Breast epithelium (tissue), 4 donors: ENCODE measurements at regions of chr4 and their contacts with region 1.

Region 1: DNA sequence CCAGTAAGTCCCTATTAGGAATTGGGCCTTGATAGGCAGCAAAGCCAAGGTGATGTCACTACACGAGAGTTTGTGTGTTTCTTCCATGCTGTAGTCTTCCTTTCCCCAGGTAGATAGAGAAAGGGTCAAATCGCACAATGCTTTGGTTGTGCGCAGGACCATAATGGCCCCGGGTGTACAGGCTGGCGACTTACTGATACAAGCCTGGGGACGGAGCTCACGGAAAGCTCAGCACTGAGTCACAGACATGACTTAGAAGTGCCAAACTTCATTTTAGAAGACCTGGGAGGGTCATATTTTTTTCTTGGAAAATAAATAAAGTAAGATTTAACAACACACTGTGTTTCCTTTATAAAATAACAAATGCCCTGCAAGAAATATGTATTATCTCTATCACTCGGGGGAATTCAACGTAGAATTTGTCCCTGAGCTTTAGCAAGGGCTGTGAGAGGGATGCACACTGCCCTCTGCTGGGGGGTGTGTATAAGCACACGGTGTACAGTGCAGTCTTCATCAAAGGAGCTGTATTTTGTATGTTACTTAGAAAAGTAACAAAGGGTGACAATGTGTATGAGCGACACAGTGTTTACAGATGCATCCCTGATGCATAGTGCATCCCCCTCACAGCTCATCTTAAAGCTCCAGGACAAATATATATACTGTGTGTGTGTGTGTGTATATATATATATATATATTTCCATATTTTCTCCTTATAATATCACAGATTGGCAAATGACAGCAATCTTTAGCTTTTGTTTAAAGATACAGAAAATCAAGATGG is 254.5 kb upstream of the VEGFC start:
- DNase-seq: peak in 1 of 2 donors; percentile 58
- H3K4me3 ChIP-seq: no peak overlapping the region
- H3K27ac ChIP-seq: no peak overlapping the region
- H3K4me1 ChIP-seq: no peaks in the 10 kb centered on the region
- H3K27me3 ChIP-seq: no peaks in the 10 kb centered on the region
- CTCF ChIP-seq: peak in 2 of 3 donors; percentile 64 to 71
- POLR2A ChIP-seq: no peak

Region 2: DNA sequence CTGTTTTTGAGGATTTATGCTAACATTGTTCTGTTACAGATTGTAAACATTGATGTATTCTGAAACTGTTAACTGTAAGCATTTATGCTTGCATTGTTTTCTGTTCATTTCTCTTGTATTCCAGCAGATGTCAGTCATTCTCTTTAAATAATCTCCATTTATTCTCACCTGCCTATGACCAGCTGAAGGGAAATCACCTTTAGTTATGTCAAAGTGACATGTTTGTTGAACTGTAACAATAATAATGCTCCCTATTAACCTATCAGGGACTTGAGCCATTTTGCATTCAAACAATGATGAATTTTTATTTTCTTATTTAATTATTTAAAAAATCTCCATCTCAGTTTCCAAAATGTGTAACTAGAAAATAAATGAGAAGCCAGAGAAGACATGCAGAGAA is 669.5 kb before region 1 on chr4:
- intact Hi-C with region 1: loop called (anchors 10 kb)
- DNase-seq: no peak
- H3K4me3 ChIP-seq: no peak overlapping the region
- H3K27ac ChIP-seq: no peak overlapping the region
- H3K4me1 ChIP-seq: no peaks in the 10 kb centered on the region
- H3K27me3 ChIP-seq: no peaks in the 10 kb centered on the region
- CTCF ChIP-seq: peak in 1 of 3 donors; percentile 44
- POLR2A ChIP-seq: no peak

Region 3: DNA sequence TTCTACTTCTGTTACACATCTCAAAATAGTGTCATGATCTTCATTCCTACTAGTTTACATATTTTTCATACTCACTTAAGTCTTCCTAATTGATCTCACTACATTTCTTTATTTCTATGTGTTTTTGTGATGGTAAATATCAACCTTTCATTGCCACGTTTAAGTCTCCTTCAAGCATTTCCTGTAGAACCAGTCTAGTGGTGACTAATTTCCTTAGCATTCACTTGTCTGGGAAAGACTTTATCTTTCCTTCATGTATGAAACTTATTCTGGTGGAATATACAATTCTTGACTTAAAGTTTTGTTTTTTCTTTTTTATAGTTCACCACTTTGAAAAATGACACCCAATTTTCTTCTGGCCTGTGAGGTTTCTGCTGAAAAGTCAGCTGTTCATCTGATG is 81.0 kb after region 1 on chr4:
- intact Hi-C with region 1: no loop called
- DNase-seq: no peak
- H3K4me3 ChIP-seq: no peak overlapping the region
- H3K27ac ChIP-seq: no peak overlapping the region
- H3K4me1 ChIP-seq: no peaks in the 10 kb centered on the region
- H3K27me3 ChIP-seq: no peaks in the 10 kb centered on the region
- CTCF ChIP-seq: no peak
- POLR2A ChIP-seq: no peak